Common myeloid progenitor, CD34-positive (primary cell): ENCODE measurements at regions of chrX and their contacts with region 1.

Region 1: DNA sequence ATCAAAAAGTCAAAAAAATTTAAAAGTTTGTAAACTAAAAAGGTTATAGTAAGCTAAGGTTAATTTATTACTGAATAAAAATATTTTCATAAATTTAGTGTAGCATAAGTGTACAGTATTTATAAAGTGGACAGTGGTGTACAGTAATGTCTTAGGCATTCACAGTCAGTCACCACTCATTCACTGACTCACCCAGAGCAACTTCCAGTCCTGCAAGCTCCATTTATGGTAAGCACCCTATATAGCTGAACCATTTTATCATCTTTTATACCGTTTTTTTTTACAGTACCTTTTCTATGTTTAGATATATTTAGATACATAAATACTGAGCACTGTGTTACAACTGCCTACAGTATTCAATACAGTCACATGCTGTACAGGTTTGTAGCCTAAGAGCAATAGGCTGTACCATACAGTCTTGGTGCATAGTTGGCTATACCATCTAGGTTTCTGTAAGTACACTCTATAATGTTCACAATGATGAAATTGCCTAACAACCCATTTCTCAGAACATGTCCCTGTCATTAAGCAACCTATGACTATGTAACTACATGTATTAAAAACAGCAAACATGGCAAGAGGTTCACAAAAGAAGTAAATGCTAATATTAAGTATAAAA is 18.6 kb downstream of the ACSL4 start:
- DNase-seq: no peak
- H3K4me3 ChIP-seq: no peak overlapping the region
- H3K27ac ChIP-seq: no peak overlapping the region
- H3K4me1 ChIP-seq: peaks cover under 1 to 13% (median 4%) of the 10 kb centered on the region in 4 experiments
- H3K27me3 ChIP-seq: no peaks in the 10 kb centered on the region

Region 2: DNA sequence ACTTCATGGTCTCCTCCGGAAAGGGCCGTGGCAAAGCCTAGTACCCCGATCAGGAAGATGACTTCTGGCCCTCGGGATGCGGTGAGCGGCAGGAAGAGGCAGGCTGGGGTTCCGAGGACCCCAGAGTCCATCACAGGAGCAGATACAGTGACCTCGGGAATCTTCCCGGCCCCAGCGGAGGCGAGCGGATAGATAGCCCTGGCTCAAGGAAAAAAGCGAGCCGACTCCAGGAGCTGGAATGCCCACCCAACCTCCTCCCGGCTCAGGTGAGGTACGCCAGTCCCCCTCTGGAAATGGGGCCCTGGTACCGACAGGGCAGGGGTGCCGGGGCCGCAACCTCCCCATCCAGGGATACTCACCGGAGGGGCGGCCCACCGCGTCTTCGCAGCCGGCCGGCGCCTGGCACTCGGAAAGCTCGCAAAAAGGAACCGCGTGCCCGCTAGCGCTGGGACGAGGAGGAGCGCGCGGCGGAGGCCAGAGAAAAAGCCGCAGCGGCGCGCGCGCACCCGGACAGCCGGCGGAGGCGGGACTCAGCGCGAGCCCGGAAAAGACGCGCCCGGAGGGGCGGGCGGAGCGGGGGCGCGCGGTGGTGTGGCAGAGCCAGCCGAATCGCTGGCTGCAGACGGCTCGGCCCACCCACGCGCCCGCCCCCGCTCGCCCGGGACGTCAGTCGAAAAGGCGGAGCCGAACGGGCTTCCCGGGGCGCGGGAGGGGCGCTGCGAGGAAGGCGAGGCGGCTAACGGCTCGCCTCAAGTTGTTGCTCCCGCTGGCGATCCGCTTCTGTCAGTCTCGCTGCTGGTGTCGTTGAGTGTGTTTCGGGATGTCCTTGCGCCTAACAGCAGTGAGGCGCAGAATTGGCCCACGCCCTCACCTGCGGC is 18.6 kb after region 1 on chrX and contains the start of gene ACSL4:
- CTCF ChIA-PET with region 1: interaction called, 10 read pairs
- POLR2A ChIA-PET with region 1: no interaction called
- DNase-seq: peak; percentile 81 to 91 (median 88)
- H3K4me3 ChIP-seq: peak within 1 kb of the TSS; percentile 67 to 90 (median 82)
- H3K27ac ChIP-seq: peak within 1 kb of the TSS in 1 of 2 experiments; percentile 78
- H3K4me1 ChIP-seq: peaks cover 5 to 33% (median 16%) of the 10 kb centered on the region in 4 experiments
- H3K27me3 ChIP-seq: no peaks in the 10 kb centered on the region

Region 3: GRCh38 chrX:109826954-109827708 is 112.7 kb after region 1 on chrX:
- CTCF ChIA-PET with region 1: no interaction called
- POLR2A ChIA-PET with region 1: no interaction called
- DNase-seq: no peak
- H3K4me3 ChIP-seq: no peak overlapping the region
- H3K27ac ChIP-seq: no peak overlapping the region
- H3K4me1 ChIP-seq: peaks cover 0 to 3% (median 0%) of the 10 kb centered on the region in 4 experiments
- H3K27me3 ChIP-seq: peaks cover 0 to 4% (median 0%) of the 10 kb centered on the region in 5 experiments

Region 4: DNA sequence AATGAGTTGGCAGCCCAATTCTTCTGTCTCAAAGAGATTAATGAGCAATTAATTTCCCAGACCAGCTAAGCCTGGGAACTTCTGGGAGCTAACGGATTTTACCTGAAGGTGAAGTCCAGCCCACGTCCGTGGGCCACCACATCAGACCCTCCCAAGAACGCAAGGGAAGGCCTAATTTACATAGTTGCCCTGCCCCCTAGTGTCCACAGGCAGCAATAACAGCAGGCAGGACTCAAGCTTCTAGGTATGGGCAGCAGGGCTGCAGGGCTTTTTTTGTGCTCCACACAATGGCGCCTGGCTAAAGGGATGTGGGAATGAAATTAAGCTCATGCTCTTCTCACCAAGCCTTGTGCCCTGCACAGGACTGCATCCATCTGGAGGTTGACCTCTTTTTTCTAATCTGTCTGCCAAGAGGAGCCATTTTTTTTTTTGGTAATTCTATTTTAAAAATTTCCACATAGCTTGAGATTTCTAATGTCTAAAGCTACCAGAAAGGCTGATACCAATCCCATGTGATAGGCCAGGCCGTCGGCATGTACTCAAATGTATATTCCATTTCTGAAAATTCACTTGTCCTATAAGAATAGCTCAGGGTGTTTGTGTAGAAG is 176.6 kb after region 1 on chrX:
- CTCF ChIA-PET with region 1: interaction called, 42 read pairs
- POLR2A ChIA-PET with region 1: no interaction called
- DNase-seq: peak; percentile 58 to 71 (median 64)
- H3K4me3 ChIP-seq: no peak overlapping the region
- H3K27ac ChIP-seq: no peak overlapping the region
- H3K4me1 ChIP-seq: peaks cover 12 to 37% (median 22%) of the 10 kb centered on the region in 4 experiments
- H3K27me3 ChIP-seq: peaks cover 0 to 3% (median 0%) of the 10 kb centered on the region in 5 experiments